ENCODE measurements at regions of chr20 and their contacts with region 1.

Region 1: GRCh38 chr20:37990571-37991151 is 42.6 kb downstream of the TTI1 start:
- DNase-seq: peak; percentile 61 to 77
- ATAC-seq: peak; percentile 85 to 96 (median 91)
- H3K4me3 ChIP-seq: no peak overlapping the region
- H3K4me3 Mint-ChIP-seq: peak overlapping the region; percentile 77
- H3K27ac ChIP-seq: peak overlapping the region; percentile 90
- H3K27ac Mint-ChIP-seq: peak overlapping the region; percentile 92 to 98
- H3K4me1 ChIP-seq: peaks cover 32% of the 10 kb centered on the region
- H3K4me1 Mint-ChIP-seq: peaks cover 26 to 31% of the 10 kb centered on the region in 2 donors
- H3K27me3 ChIP-seq: no peaks in the 10 kb centered on the region
- H3K27me3 Mint-ChIP-seq: no peaks in the 10 kb centered on the region
- CTCF ChIP-seq: no peak

Region 2: GRCh38 chr20:37527638-37528441 is 462.8 kb before region 1 on chr20 and contains the start of gene BLCAP:
- intact Hi-C with region 1: loop called (anchors 2 kb)
- DNase-seq: peak; percentile 90 to 96
- ATAC-seq: peak; percentile 86 to 95 (median 88)
- H3K4me3 ChIP-seq: peak within 1 kb of the TSS; percentile 88
- H3K4me3 Mint-ChIP-seq: peak within 1 kb of the TSS; percentile 96
- H3K27ac ChIP-seq: peak within 1 kb of the TSS; percentile 90
- H3K27ac Mint-ChIP-seq: peak within 1 kb of the TSS; percentile 99
- H3K4me1 ChIP-seq: peaks cover 40% of the 10 kb centered on the region
- H3K4me1 Mint-ChIP-seq: peaks cover 52 to 66% of the 10 kb centered on the region in 2 donors
- H3K27me3 ChIP-seq: no peaks in the 10 kb centered on the region
- H3K27me3 Mint-ChIP-seq: peaks cover 0 to 3% of the 10 kb centered on the region in 2 donors
- CTCF ChIP-seq: no peak
- total RNA-seq, gene BLCAP: 60.4 to 80.1 (median 77.9) TPM

Region 3: GRCh38 chr20:37579106-37579505 is 411.6 kb before region 1 on chr20:
- intact Hi-C with region 1: no loop called
- DNase-seq: no peak
- ATAC-seq: no peak
- H3K4me3 ChIP-seq: no peak overlapping the region
- H3K4me3 Mint-ChIP-seq: no peak overlapping the region
- H3K27ac ChIP-seq: no peak overlapping the region
- H3K27ac Mint-ChIP-seq: no peak overlapping the region
- H3K4me1 ChIP-seq: no peaks in the 10 kb centered on the region
- H3K4me1 Mint-ChIP-seq: no peaks in the 10 kb centered on the region
- H3K27me3 ChIP-seq: no peaks in the 10 kb centered on the region
- H3K27me3 Mint-ChIP-seq: peaks cover 12 to 15% of the 10 kb centered on the region in 2 donors
- CTCF ChIP-seq: no peak

Region 4: GRCh38 chr20:37651932-37652331 is 338.7 kb before region 1 on chr20:
- intact Hi-C with region 1: loop called (anchors 5 kb)
- DNase-seq: peak in 1 of 2 donors; percentile 30
- ATAC-seq: peak in 2 of 3 donors; percentile 49 to 61
- H3K4me3 ChIP-seq: no peak overlapping the region
- H3K4me3 Mint-ChIP-seq: no peak overlapping the region
- H3K27ac ChIP-seq: no peak overlapping the region
- H3K27ac Mint-ChIP-seq: no peak overlapping the region
- H3K4me1 ChIP-seq: no peaks in the 10 kb centered on the region
- H3K4me1 Mint-ChIP-seq: no peaks in the 10 kb centered on the region
- H3K27me3 ChIP-seq: no peaks in the 10 kb centered on the region
- H3K27me3 Mint-ChIP-seq: peaks cover 18 to 22% of the 10 kb centered on the region in 2 donors
- CTCF ChIP-seq: no peak

Region 5: DNA sequence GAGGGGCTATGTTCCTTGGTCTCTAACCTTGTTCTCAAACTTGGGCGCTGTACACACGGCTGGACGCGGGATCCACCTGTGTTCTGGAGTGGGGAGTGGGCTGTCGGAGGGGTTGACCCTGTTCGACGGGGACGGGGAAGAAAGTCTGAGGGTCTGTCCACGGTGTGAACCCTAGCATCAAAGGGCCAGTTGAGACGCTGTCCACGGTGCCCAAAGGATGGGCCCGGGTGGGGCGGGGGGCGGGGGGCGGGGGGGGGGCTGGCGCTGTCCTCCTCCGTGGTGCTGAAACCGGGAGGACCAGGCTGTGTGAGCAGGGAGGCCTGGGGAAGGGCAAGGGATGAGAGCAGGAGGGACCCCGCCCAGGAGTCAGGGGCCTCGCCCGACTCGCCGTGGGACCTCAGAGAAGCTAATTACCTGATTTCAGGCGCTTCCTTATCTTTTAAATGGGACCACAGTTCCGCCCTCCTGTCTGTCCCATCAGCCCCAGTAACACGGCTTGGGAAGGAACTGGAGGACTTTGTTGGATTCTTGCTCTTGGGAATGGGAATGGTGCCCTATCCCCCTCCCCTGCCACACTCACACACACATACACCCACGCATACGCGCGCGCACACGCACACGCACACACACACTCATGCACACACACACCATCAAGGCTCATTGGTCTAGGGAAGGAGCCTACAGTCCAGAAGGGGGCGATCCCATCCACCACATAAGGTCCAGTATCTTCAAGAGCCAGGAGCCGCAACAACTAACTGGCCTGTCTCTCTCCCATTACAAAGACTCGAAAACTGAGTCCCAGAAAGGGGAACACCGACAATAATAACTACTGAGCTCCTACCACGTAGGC is 88.8 kb before region 1 on chr20:
- intact Hi-C with region 1: loop called (anchors 1 kb)
- DNase-seq: peak in 1 of 2 donors; percentile 34
- ATAC-seq: peak; percentile 53 to 74 (median 73)
- H3K4me3 ChIP-seq: no peak overlapping the region
- H3K4me3 Mint-ChIP-seq: peak overlapping the region; percentile 72
- H3K27ac ChIP-seq: no peak overlapping the region
- H3K27ac Mint-ChIP-seq: no peak overlapping the region
- H3K4me1 ChIP-seq: peaks cover 8% of the 10 kb centered on the region
- H3K4me1 Mint-ChIP-seq: peaks cover 7 to 18% of the 10 kb centered on the region in 2 donors
- H3K27me3 ChIP-seq: peaks cover 21% of the 10 kb centered on the region
- H3K27me3 Mint-ChIP-seq: peaks cover 57 to 58% of the 10 kb centered on the region in 2 donors
- CTCF ChIP-seq: no peak

Region 6: GRCh38 chr20:38001173-38001872 is 10.7 kb after region 1 on chr20:
- intact Hi-C with region 1: no loop called
- DNase-seq: no peak
- ATAC-seq: no peak
- H3K4me3 ChIP-seq: no peak overlapping the region
- H3K4me3 Mint-ChIP-seq: no peak overlapping the region
- H3K27ac ChIP-seq: no peak overlapping the region
- H3K27ac Mint-ChIP-seq: no peak overlapping the region
- H3K4me1 ChIP-seq: no peaks in the 10 kb centered on the region
- H3K4me1 Mint-ChIP-seq: peaks cover 0 to under 1% of the 10 kb centered on the region in 2 donors
- H3K27me3 ChIP-seq: no peaks in the 10 kb centered on the region
- H3K27me3 Mint-ChIP-seq: no peaks in the 10 kb centered on the region
- CTCF ChIP-seq: no peak

Region 7: DNA sequence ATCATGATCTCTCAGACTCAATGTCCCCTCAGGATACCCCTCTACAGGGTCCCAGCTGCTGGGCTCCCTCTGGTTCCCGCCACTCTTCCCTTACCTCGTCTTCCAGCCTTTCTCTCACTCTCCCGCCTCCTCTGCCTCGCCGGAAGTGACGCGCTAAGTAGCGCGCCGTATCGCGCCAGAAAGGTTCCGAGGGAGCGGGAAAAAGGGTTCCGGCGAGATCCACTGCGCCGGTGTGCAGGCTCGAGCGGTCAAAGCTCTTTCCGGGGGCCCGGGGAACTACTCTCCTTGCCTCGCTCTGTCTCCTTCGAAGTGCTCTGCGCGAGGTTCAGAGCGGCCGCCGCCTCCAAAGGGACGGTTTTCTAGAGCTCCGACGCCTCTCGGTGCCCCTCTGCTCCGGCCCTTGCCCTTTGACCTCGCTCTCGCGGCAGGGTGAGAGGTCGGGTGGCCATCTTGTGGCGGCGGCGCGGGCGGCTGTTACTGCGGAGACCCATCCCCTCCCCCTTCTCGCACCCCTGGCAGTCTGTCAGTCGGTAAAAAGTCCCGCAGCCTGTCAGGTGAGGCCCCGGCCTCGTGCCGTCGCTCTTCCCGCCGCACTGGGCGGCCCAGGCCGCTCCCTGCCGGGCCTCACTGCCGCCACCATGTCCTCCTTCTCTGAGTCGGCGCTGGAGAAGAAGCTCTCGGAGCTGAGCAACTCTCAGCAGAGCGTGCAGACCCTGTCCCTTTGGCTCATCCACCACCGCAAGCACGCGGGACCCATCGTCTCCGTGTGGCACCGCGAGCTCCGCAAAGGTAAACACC is 42.8 kb after region 1 on chr20 and contains the starts of genes RPRD1B and TTI1:
- intact Hi-C with region 1: loop called (anchors 1 kb)
- DNase-seq: peak; percentile 92 to 95
- ATAC-seq: peak; percentile 83 to 91 (median 84)
- H3K4me3 ChIP-seq: peak within 1 kb of the TSS; percentile 73
- H3K4me3 Mint-ChIP-seq: peak within 1 kb of the TSS; percentile 94
- H3K27ac ChIP-seq: peak within 1 kb of the TSS; percentile 91
- H3K27ac Mint-ChIP-seq: peak within 1 kb of the TSS; percentile 94 to 97
- H3K4me1 ChIP-seq: peaks cover 30% of the 10 kb centered on the region
- H3K4me1 Mint-ChIP-seq: peaks cover 61 to 70% of the 10 kb centered on the region in 2 donors
- H3K27me3 ChIP-seq: no peaks in the 10 kb centered on the region
- H3K27me3 Mint-ChIP-seq: no peaks in the 10 kb centered on the region
- CTCF ChIP-seq: no peak
- total RNA-seq, gene RPRD1B: 75.8 to 87.3 (median 77.6) TPM
- total RNA-seq, gene TTI1: 15.9 to 23.9 (median 18.9) TPM

Measured in natural killer cell (primary cell).